ENCODE measurements at regions of chr9 and their contacts with region 1.

Region 1: GRCh38 chr9:83266666-83267496 is 203.9 kb upstream of the RASEF start:
- DNase-seq: peak in 4 of 5 donors; percentile 60 to 86 (median 70)
- ATAC-seq: peak; percentile 92 to 94 (median 94)
- H3K4me3 ChIP-seq: peak overlapping the region in 10 of 12 donors; percentile 19 to 54 (median 46)
- H3K27ac ChIP-seq: peak overlapping the region; percentile 66 to 93 (median 81)
- H3K4me1 ChIP-seq: peaks cover 2 to 71% (median 35%) of the 10 kb centered on the region in 12 donors
- H3K27me3 ChIP-seq: no peaks in the 10 kb centered on the region
- CTCF ChIP-seq: no peak
- POLR2A ChIP-seq: no peak

Region 2: GRCh38 chr9:83231033-83231432 is 35.8 kb before region 1 on chr9:
- intact Hi-C with region 1: loop called in 2 of 10 experiments (anchors 5 kb)
- DNase-seq: no peak
- ATAC-seq: peak in 3 of 4 donors; percentile 63 to 82 (median 77)
- H3K4me3 ChIP-seq: no peak overlapping the region
- H3K27ac ChIP-seq: peak overlapping the region in 2 of 12 donors; percentile 24 to 44
- H3K4me1 ChIP-seq: peaks cover 0 to 28% (median 5%) of the 10 kb centered on the region in 12 donors
- H3K27me3 ChIP-seq: no peaks in the 10 kb centered on the region
- CTCF ChIP-seq: peak in 6 of 12 donors; percentile 22 to 80 (median 50)
- POLR2A ChIP-seq: no peak

Measured in heart left ventricle (tissue), 16 donors.